MCF 10A (cell line): ENCODE measurements at regions of chr20 and their contacts with region 1.

Region 1: GRCh38 chr20:52004715-52005114 is 186.9 kb downstream of the ZFP64 start:
- DNase-seq: peak; percentile 77
- H3K4me3 Mint-ChIP-seq: no peak overlapping the region
- H3K27ac Mint-ChIP-seq: no peak overlapping the region
- H3K4me1 Mint-ChIP-seq: peaks cover 9% of the 10 kb centered on the region
- H3K27me3 Mint-ChIP-seq: no peaks in the 10 kb centered on the region
- CTCF ChIP-seq: no peak

Region 2: DNA sequence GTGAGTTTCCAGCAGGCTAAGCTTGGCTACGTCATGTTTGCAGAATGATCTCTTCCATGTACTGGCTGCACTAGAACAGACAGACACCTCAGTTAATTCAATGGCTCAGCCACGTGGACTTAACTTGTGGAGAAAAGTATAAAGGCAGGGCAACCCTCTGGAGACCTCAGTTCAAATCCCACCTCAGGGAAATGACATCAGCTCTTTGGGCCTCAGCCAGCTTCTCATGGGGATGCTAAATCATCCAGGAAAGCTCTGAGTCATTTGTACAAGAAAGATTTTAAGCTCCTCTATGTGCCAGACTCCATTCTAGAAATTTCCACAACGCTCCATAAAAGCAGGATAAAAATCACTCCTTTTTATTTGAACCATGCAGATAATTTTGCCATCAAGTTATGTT is 73.9 kb before region 1 on chr20:
- CTCF ChIA-PET with region 1: no interaction called
- POLR2A ChIA-PET with region 1: no interaction called
- intact Hi-C with region 1: no loop called
- DNase-seq: peak; percentile 82
- H3K4me3 Mint-ChIP-seq: no peak overlapping the region
- H3K27ac Mint-ChIP-seq: no peak overlapping the region
- H3K4me1 Mint-ChIP-seq: no peaks in the 10 kb centered on the region
- H3K27me3 Mint-ChIP-seq: no peaks in the 10 kb centered on the region
- CTCF ChIP-seq: no peak

Region 3: DNA sequence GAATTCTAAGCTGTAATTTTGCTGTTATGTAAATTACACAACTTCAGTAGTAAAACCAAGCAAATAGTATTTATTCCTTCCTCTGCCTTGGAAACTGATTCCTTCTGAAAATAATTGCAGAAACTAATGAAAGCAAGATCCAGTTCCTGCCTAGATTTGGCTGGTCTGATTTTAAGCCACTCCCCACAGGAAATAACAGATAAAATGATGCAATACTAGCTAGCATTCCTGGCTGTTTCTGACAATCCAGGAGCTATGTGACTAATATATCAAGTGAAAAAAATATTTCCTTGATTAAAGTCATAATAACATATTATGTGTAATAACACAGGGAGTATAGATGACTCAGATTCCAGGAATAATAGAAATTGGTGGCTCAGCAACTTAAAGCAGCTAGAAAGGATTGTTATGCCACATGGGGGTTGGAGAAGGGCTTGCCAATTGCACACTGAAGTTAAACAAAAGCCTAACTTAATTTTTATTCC is 19.7 kb before region 1 on chr20:
- CTCF ChIA-PET with region 1: interaction called, 4 read pairs
- POLR2A ChIA-PET with region 1: interaction called, 11 read pairs
- intact Hi-C with region 1: no loop called
- DNase-seq: peak; percentile 93
- H3K4me3 Mint-ChIP-seq: peak overlapping the region; percentile 46
- H3K27ac Mint-ChIP-seq: peak overlapping the region; percentile 93
- H3K4me1 Mint-ChIP-seq: peaks cover 11% of the 10 kb centered on the region
- H3K27me3 Mint-ChIP-seq: no peaks in the 10 kb centered on the region
- CTCF ChIP-seq: no peak

Region 4: GRCh38 chr20:52033301-52033700 is 28.6 kb after region 1 on chr20:
- CTCF ChIA-PET with region 1: no interaction called
- POLR2A ChIA-PET with region 1: no interaction called
- intact Hi-C with region 1: no loop called
- DNase-seq: no peak
- H3K4me3 Mint-ChIP-seq: no peak overlapping the region
- H3K27ac Mint-ChIP-seq: no peak overlapping the region
- H3K4me1 Mint-ChIP-seq: no peaks in the 10 kb centered on the region
- H3K27me3 Mint-ChIP-seq: no peaks in the 10 kb centered on the region
- CTCF ChIP-seq: no peak